ENCODE measurements at regions of chr11 and their contacts with region 1.

Region 1: DNA sequence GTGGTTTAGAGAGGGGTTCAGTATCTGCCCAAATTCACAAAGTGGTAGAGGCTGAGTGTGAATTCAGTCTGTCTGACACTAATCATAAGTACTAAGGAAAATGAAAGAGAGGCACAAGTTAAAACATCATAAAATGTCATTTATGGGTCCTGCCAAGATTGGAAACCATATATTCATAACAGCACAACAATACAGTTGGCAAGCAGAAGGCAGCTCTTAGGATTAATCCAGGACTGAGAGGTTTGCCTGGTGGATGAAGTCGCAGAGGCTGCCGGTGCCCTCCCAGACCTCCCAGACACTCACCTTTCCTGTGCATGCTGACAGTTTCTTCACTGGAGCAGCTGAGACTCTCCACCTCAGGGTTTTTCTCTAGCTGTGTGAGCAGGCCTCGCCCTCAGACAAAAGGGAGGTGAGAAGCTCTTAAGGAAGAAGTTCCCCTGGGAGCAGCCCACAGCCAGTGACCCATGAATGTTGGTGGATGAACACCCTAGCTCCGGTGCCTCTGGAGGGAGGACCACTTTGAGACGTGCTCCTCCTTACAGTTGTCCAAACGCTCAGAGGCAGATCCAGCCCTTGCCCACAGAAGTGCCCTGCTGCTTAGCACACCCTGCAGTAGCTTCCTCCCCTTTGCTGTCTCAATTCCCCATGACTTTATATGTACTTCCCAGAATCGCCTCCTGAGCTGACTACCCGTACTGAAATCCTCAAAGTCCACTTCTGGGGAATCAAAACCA is 43.7 kb downstream of the MAML2 start:
- DNase-seq: no peak
- H3K4me3 ChIP-seq: peak overlapping the region in 1 of 2 donors; percentile 10
- H3K27ac ChIP-seq: peak overlapping the region; percentile 51 to 71
- H3K4me1 ChIP-seq: peaks cover 0 to 29% of the 10 kb centered on the region in 2 donors
- H3K27me3 ChIP-seq: no peaks in the 10 kb centered on the region
- CTCF ChIP-seq: no peak

Region 2: GRCh38 chr11:95688580-95689189 is 610.6 kb before region 1 on chr11:
- intact Hi-C with region 1: no loop called
- DNase-seq: no peak
- H3K4me3 ChIP-seq: no peak overlapping the region
- H3K27ac ChIP-seq: no peak overlapping the region
- H3K4me1 ChIP-seq: peaks cover 0 to 3% of the 10 kb centered on the region in 2 donors
- H3K27me3 ChIP-seq: no peaks in the 10 kb centered on the region
- CTCF ChIP-seq: no peak

Region 3: DNA sequence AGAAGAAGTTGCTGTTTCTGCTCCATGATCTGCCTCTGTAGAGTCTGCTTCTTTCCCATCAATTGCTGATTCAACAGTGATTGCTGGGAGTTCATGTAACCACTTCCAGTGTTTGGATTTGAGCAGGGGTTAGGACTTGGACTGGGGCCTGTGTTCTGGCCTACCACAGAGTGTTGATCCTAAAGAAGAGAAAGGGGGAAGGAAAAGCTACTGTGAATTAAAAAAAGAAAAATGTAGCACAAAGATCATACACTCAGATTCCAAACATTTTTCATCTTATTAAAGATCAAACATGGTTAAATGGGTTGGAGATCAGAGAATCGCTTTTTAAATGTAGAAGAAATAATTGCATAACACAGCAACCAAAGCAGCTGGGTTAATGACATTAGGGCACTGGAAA is 307.8 kb before region 1 on chr11:
- intact Hi-C with region 1: no loop called
- DNase-seq: no peak
- H3K4me3 ChIP-seq: no peak overlapping the region
- H3K27ac ChIP-seq: peak overlapping the region; percentile 31 to 47
- H3K4me1 ChIP-seq: peaks cover 0 to 8% of the 10 kb centered on the region in 2 donors
- H3K27me3 ChIP-seq: no peaks in the 10 kb centered on the region
- CTCF ChIP-seq: no peak

Region 4: DNA sequence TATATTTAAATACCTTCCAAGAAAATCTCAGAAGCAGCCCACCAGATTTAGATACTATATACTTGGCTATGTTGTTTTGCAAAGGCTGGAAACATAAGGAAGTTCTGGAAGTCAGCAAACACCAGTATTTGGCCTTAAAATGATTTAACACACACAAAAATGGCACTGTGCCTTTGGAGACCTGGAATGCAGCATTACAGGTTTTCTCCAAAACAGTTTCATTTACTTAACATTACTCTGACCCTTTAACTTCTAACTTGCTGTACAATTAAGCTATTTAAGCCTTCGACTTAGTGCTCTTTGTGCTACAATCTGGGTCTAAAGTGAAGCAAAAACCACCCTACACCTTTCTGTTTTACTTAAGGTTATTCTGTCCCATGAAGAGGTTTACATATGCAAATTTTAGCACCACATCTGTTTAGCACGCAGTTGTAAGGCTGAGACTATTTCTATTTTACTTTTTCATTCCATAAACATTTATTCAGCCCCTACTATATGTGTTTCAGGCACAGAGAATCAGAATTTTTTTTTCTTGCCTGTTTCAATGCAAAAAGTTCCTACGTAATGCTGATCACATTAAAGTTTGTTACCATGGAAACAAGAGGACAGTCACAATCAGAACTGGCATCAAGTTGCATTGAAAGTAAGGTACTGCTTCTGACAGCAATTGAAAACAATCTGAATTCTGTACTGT is 26.6 kb before region 1 on chr11:
- intact Hi-C with region 1: loop called (anchors 2 kb)
- DNase-seq: no peak
- H3K4me3 ChIP-seq: no peak overlapping the region
- H3K27ac ChIP-seq: peak overlapping the region in 1 of 2 donors; percentile 27
- H3K4me1 ChIP-seq: peaks cover 0 to 12% of the 10 kb centered on the region in 2 donors
- H3K27me3 ChIP-seq: no peaks in the 10 kb centered on the region
- CTCF ChIP-seq: no peak